Right ventricle myocardium superior (tissue), 1 donor: ENCODE measurements at regions of chr11 and their contacts with region 1.

Region 1: GRCh38 chr11:129331871-129332274 is 43.8 kb upstream of the BARX2 start:
- DNase-seq: peak; percentile 89
- ATAC-seq: peak; percentile 98

Region 2: GRCh38 chr11:129117595-129118350 is 214.1 kb before region 1 on chr11:
- intact Hi-C with region 1: loop called (anchors 2 kb)
- DNase-seq: no peak
- ATAC-seq: peak; percentile 70